ENCODE measurements at regions of chr10 and their contacts with region 1.

Region 1: GRCh38 chr10:44569193-44570091 is 184.5 kb upstream of the CXCL12 start:
- DNase-seq: no peak
- ATAC-seq: peak; percentile 79

Region 2: DNA sequence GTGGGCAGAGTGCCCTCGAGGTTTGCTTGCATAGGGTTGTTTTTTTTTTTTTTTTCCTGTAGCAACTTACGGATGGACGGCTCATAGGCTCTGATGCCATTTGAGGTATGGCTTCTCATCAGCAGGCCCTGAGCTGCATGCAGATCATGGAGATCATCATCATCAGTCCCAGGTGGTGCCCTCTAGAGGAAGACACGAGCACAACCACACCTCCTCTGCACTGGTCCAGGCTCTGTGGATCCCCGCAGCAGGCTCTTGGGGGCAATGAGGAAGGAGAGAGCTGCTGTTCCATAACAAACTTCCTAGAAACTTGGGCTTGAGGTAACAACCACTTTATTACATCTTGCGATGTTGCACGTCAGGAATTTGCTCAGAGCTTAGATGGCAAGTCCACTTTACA is 51.8 kb before region 1 on chr10:
- intact Hi-C with region 1: loop called (anchors 10 kb)
- DNase-seq: no peak
- ATAC-seq: no peak

Measured in sciatic nerve (tissue), 2 donors.